Calu3 (cell line): ENCODE measurements at regions of chr18 and their contacts with region 1.

Region 1: GRCh38 chr18:36809590-36810381 is 19.0 kb downstream of the TPGS2 start:
- DNase-seq: peak; percentile 26
- H3K4me3 Mint-ChIP-seq: no peak overlapping the region
- H3K27ac Mint-ChIP-seq: no peak overlapping the region
- H3K4me1 Mint-ChIP-seq: no peaks in the 10 kb centered on the region
- H3K27me3 Mint-ChIP-seq: no peaks in the 10 kb centered on the region
- CTCF ChIP-seq: peak; percentile 64

Region 2: GRCh38 chr18:36688020-36688965 is 121.5 kb before region 1 on chr18:
- CTCF ChIA-PET with region 1: no interaction called
- intact Hi-C with region 1: loop called (anchors 1 kb)
- DNase-seq: peak; percentile 83
- H3K4me3 Mint-ChIP-seq: no peak overlapping the region
- H3K27ac Mint-ChIP-seq: no peak overlapping the region
- H3K4me1 Mint-ChIP-seq: no peaks in the 10 kb centered on the region
- H3K27me3 Mint-ChIP-seq: peaks cover 34% of the 10 kb centered on the region
- CTCF ChIP-seq: peak; percentile 93